Activated T-helper 2 cell treated with anti-CD3 and anti-CD28 coated beads, Interferon-gamma antibody, Interleukin-2, Interleukin-4, amounts not matched to agents 10 μg/mL and 5 μg/mL and 100 μg/mL, durations not matched to agents 14 hours and 24 hours and 36 hours (primary cell): ENCODE measurements at regions of chr18 and their contacts with region 1.

Region 1: DNA sequence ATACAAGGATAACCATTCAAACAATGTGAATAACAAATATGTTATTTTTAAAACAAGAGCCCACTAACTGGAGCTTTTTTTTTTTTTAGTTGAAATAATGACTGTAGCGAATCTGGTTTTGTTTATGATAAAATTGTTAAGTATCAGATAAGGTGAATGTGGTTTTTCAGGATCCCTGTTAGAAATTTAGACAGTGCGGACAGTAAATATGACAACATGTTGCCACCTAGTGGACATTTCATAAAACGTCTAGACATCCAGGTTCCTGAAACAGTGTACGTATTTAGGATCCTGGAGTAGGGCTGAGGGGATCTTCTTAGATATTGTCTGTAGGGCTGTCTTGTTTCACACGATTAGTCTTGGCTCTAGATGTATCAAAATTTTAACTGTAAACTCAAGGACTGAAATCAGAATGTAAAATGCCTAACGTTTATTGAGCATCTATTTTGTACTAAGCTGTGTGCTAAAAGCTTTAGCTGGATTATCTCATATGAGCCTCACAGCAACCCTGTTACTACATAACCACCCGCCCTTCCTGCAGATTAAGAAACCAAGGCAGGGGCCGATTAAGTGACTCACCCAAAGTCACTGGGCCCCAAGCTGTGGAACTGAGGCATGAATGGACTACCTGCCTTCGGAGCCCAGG is 23.9 kb upstream of the CCDC68 start:
- DNase-seq: no peak
- H3K4me3 Mint-ChIP-seq: no peak overlapping the region
- H3K27ac Mint-ChIP-seq: no peak overlapping the region
- H3K4me1 Mint-ChIP-seq: peaks cover 4% of the 10 kb centered on the region
- H3K27me3 Mint-ChIP-seq: peaks cover 16% of the 10 kb centered on the region

Region 2: DNA sequence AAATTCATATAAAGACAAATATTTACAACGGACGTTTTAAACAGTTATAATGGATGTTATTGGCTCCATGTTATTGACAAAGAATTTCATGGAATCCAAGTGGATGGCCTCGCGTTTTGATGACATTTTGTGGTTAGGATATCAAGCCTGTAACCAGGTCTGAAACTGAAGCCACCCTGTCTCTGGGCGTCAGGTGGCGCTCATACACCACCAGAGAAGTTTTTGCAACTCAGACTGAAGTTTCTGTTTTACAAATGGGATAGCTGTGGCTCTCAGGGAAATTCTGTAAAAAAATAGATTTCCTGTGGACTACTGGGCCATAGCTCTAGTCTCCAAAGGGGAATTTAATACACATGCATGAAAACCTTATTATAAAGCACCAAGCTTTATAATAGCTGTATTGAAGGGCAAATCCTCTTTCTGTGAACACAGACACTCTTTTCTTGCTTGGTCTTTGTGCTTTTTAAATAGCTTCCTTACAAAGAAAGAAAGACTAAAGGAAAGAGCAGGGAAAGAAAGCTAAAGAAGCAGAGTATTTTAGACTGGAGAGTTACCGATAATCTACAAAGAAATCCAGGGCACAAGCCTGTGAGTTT is 538.7 kb before region 1 on chr18:
- intact Hi-C with region 1: loop called (anchors 5 kb)
- DNase-seq: no peak
- H3K4me3 Mint-ChIP-seq: no peak overlapping the region
- H3K27ac Mint-ChIP-seq: no peak overlapping the region
- H3K4me1 Mint-ChIP-seq: peaks cover 1% of the 10 kb centered on the region
- H3K27me3 Mint-ChIP-seq: peaks cover 17% of the 10 kb centered on the region

Region 3: GRCh38 chr18:54558609-54559585 is 424.3 kb before region 1 on chr18:
- intact Hi-C with region 1: loop called (anchors 5 kb)
- DNase-seq: no peak
- H3K4me3 Mint-ChIP-seq: no peak overlapping the region
- H3K27ac Mint-ChIP-seq: no peak overlapping the region
- H3K4me1 Mint-ChIP-seq: no peaks in the 10 kb centered on the region
- H3K27me3 Mint-ChIP-seq: no peaks in the 10 kb centered on the region

Region 4: DNA sequence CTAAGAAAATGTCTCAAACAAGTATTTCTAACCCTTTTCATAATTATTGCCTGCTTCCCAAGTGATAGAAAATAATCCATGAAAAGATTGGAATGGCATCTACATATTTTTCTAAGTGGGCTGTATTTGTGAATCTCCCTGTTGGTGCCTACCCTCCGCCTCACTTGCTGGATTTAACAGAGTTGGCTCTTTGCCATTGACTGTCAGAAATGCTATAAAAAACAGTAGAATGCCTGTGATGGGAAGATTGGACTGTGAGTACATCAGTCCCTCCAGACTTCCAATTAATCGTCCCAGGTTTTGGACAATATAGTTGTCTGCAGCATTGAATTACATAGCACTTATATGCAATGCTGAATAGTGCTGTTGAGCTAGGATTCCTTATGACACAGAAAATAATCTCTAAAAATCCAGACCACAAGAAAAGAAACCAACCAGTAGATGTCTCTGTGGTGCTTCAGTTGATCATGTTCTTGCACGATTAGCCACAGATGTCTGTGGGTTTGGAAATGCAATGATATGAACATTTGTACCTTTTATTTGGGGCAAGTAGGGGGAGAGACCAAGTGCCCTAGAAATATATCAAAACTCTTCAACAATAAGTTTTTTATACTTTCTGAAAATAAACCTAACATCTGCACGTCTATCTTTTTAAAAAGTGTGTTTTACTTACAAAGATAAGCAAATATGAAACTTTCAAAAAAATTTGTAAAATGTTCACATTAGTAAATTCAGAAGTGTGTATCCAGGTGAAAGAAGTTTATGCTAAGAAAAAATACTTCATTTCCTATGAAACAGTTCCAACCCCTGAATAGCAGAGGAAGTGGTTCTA is 303.6 kb before region 1 on chr18:
- intact Hi-C with region 1: loop called (anchors 1 kb)
- DNase-seq: no peak
- H3K4me3 Mint-ChIP-seq: no peak overlapping the region
- H3K27ac Mint-ChIP-seq: no peak overlapping the region
- H3K4me1 Mint-ChIP-seq: peaks cover 4% of the 10 kb centered on the region
- H3K27me3 Mint-ChIP-seq: peaks cover 34% of the 10 kb centered on the region

Region 5: GRCh38 chr18:54852780-54853675 is 130.1 kb before region 1 on chr18:
- intact Hi-C with region 1: loop called (anchors 5 kb)
- DNase-seq: no peak
- H3K4me3 Mint-ChIP-seq: peak overlapping the region; percentile 6
- H3K27ac Mint-ChIP-seq: no peak overlapping the region
- H3K4me1 Mint-ChIP-seq: peaks cover 22% of the 10 kb centered on the region
- H3K27me3 Mint-ChIP-seq: peaks cover 6% of the 10 kb centered on the region

Region 6: GRCh38 chr18:55878224-55878623 is 895.1 kb after region 1 on chr18:
- intact Hi-C with region 1: no loop called
- DNase-seq: no peak
- H3K4me3 Mint-ChIP-seq: no peak overlapping the region
- H3K27ac Mint-ChIP-seq: no peak overlapping the region
- H3K4me1 Mint-ChIP-seq: peaks cover 4% of the 10 kb centered on the region
- H3K27me3 Mint-ChIP-seq: no peaks in the 10 kb centered on the region